ENCODE measurements at regions of chr1 and their contacts with region 1.

Region 1: GRCh38 chr1:187952481-187952880 is 1123.7 kb downstream of the PLA2G4A start:
- DNase-seq: no peak
- ATAC-seq: no peak
- H3K4me3 ChIP-seq: no peak overlapping the region
- H3K27ac ChIP-seq: no peak overlapping the region
- H3K4me1 ChIP-seq: no peaks in the 10 kb centered on the region
- H3K27me3 ChIP-seq: no peaks in the 10 kb centered on the region
- CTCF ChIP-seq: no peak
- POLR2A ChIP-seq: no peak

Region 2: GRCh38 chr1:187817782-187818181 is 134.7 kb before region 1 on chr1:
- in situ Hi-C with region 1: no loop called
- intact Hi-C with region 1: no loop called
- DNase-seq: no peak
- ATAC-seq: no peak
- H3K4me3 ChIP-seq: no peak overlapping the region
- H3K27ac ChIP-seq: no peak overlapping the region
- H3K4me1 ChIP-seq: no peaks in the 10 kb centered on the region
- H3K27me3 ChIP-seq: no peaks in the 10 kb centered on the region
- CTCF ChIP-seq: no peak
- POLR2A ChIP-seq: no peak

Region 3: DNA sequence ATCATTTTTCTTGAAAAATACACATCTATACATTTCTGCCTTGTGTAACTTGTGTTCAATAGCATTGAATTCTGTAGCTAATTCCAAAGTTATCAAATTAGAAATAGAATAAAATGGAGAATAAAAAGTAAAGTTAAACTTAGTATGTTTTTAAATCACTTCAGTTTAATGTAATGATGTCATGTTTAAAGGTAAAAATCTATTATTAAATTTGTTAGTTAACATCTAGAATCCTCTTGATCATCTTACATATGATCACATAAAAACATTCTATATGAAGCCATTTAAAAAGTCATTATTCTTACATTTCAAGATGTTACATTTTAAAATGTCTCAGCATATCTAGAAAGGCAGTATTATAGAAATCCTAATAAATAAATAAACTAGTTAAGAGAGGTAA is 39.5 kb after region 1 on chr1:
- in situ Hi-C with region 1: loop called in 1 of 4 experiments (anchors 5 kb)
- intact Hi-C with region 1: no loop called
- DNase-seq: no peak
- ATAC-seq: no peak
- H3K4me3 ChIP-seq: no peak overlapping the region
- H3K27ac ChIP-seq: no peak overlapping the region
- H3K4me1 ChIP-seq: no peaks in the 10 kb centered on the region
- H3K27me3 ChIP-seq: no peaks in the 10 kb centered on the region
- CTCF ChIP-seq: no peak
- POLR2A ChIP-seq: no peak

Measured in gastrocnemius medialis (tissue), 4 donors.